Activated CD8-positive, alpha-beta T cell treated with anti-CD3 and anti-CD28 coated beads for 36 hours (primary cell): ENCODE measurements at regions of chr20 and their contacts with region 1.

Region 1: GRCh38 chr20:57391074-57391554 is at the start of gene RBM38:
- DNase-seq: peak; percentile 82
- ATAC-seq: peak; percentile 61
- H3K4me3 Mint-ChIP-seq: peak within 1 kb of the TSS; percentile 84
- H3K27ac Mint-ChIP-seq: peak within 1 kb of the TSS; percentile 99
- H3K4me1 Mint-ChIP-seq: peaks cover 34% of the 10 kb centered on the region
- H3K27me3 Mint-ChIP-seq: no peaks in the 10 kb centered on the region
- CTCF ChIP-seq: no peak
- total RNA-seq, gene RBM38: 114 to 116 TPM

Region 2: GRCh38 chr20:57374931-57375651 is 16.0 kb before region 1 on chr20:
- CTCF ChIA-PET with region 1: interaction called, 5 read pairs
- POLR2A ChIA-PET with region 1: interaction called, 13 read pairs
- intact Hi-C with region 1: no loop called
- DNase-seq: no peak
- ATAC-seq: no peak
- H3K4me3 Mint-ChIP-seq: no peak overlapping the region
- H3K27ac Mint-ChIP-seq: peak overlapping the region; percentile 19
- H3K4me1 Mint-ChIP-seq: peaks cover 28% of the 10 kb centered on the region
- H3K27me3 Mint-ChIP-seq: no peaks in the 10 kb centered on the region
- CTCF ChIP-seq: no peak

Region 3: GRCh38 chr20:57409672-57410397 is 18.7 kb after region 1 on chr20:
- CTCF ChIA-PET with region 1: interaction called, 3 read pairs
- POLR2A ChIA-PET with region 1: interaction called, 14 read pairs
- intact Hi-C with region 1: no loop called
- DNase-seq: no peak
- ATAC-seq: no peak
- H3K4me3 Mint-ChIP-seq: no peak overlapping the region
- H3K27ac Mint-ChIP-seq: no peak overlapping the region
- H3K4me1 Mint-ChIP-seq: peaks cover 9% of the 10 kb centered on the region
- H3K27me3 Mint-ChIP-seq: no peaks in the 10 kb centered on the region
- CTCF ChIP-seq: no peak

Region 4: GRCh38 chr20:57432874-57433491 is 41.9 kb after region 1 on chr20:
- CTCF ChIA-PET with region 1: interaction called, 10 read pairs
- POLR2A ChIA-PET with region 1: interaction called, 9 read pairs
- intact Hi-C with region 1: loop called (anchors 5 kb)
- DNase-seq: peak; percentile 84
- ATAC-seq: peak; percentile 86
- H3K4me3 Mint-ChIP-seq: no peak overlapping the region
- H3K27ac Mint-ChIP-seq: peak overlapping the region; percentile 78
- H3K4me1 Mint-ChIP-seq: peaks cover 58% of the 10 kb centered on the region
- H3K27me3 Mint-ChIP-seq: no peaks in the 10 kb centered on the region
- CTCF ChIP-seq: no peak

Region 5: GRCh38 chr20:57509722-57510164 is 118.6 kb after region 1 on chr20:
- CTCF ChIA-PET with region 1: no interaction called
- POLR2A ChIA-PET with region 1: no interaction called
- intact Hi-C with region 1: no loop called
- DNase-seq: peak; percentile 26
- ATAC-seq: no peak
- H3K4me3 Mint-ChIP-seq: no peak overlapping the region
- H3K27ac Mint-ChIP-seq: no peak overlapping the region
- H3K4me1 Mint-ChIP-seq: no peaks in the 10 kb centered on the region
- H3K27me3 Mint-ChIP-seq: peaks cover 19% of the 10 kb centered on the region
- CTCF ChIP-seq: no peak